Prostate gland (tissue), 2 donors: ENCODE measurements at regions of chr3 and their contacts with region 1.

Region 1: GRCh38 chr3:40191850-40192448 is 117.6 kb upstream of the EIF1B start:
- DNase-seq: peak; percentile 20
- H3K4me3 ChIP-seq: no peak overlapping the region
- H3K27ac ChIP-seq: no peak overlapping the region
- H3K4me1 ChIP-seq: no peaks in the 10 kb centered on the region
- H3K27me3 ChIP-seq: no peaks in the 10 kb centered on the region
- CTCF ChIP-seq: peak; percentile 67 to 86 (median 76)
- POLR2A ChIP-seq: no peak

Region 2: DNA sequence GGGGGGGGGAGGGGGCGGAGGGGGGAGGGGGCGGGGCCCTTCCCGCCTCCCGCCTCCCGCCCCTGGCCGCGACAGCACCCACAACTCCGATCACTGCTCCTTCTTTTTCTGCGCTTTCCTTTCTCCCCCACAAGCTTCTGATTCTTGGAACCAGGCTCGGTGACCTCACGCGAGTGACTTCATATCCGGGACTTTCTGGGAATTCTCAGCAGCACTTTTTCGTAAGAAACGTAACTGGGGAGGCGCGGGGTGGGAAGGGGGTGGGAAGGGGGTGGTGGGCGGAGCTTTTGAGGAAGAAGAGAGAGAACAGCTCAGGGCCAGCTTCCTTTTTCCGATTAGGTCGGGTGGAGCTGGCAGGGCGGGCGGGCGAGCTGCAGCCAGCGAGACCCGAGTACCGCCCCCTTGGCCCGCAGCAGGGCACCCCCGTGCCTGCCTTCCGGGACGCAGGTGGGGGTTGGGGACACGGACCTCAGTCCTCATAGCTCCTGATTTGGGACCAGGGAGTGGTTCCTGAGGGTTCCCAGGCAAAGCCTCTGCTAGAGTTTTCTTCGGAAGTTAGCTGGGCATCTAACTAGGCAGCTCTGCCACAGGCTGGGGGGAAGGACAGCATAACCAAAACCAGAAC is 1014.1 kb before region 1 on chr3:
- intact Hi-C with region 1: no loop called
- DNase-seq: peak; percentile 91
- H3K4me3 ChIP-seq: peak overlapping the region; percentile 27 to 34
- H3K27ac ChIP-seq: peak overlapping the region; percentile 93 to 94
- H3K4me1 ChIP-seq: peaks cover 4% of the 10 kb centered on the region
- H3K27me3 ChIP-seq: no peaks in the 10 kb centered on the region
- CTCF ChIP-seq: no peak
- POLR2A ChIP-seq: peak; percentile 84

Region 3: GRCh38 chr3:40086890-40087888 is 104.8 kb before region 1 on chr3:
- intact Hi-C with region 1: no loop called
- DNase-seq: peak; percentile 46
- H3K4me3 ChIP-seq: no peak overlapping the region
- H3K27ac ChIP-seq: no peak overlapping the region
- H3K4me1 ChIP-seq: no peaks in the 10 kb centered on the region
- H3K27me3 ChIP-seq: no peaks in the 10 kb centered on the region
- CTCF ChIP-seq: no peak
- POLR2A ChIP-seq: no peak

Region 4: DNA sequence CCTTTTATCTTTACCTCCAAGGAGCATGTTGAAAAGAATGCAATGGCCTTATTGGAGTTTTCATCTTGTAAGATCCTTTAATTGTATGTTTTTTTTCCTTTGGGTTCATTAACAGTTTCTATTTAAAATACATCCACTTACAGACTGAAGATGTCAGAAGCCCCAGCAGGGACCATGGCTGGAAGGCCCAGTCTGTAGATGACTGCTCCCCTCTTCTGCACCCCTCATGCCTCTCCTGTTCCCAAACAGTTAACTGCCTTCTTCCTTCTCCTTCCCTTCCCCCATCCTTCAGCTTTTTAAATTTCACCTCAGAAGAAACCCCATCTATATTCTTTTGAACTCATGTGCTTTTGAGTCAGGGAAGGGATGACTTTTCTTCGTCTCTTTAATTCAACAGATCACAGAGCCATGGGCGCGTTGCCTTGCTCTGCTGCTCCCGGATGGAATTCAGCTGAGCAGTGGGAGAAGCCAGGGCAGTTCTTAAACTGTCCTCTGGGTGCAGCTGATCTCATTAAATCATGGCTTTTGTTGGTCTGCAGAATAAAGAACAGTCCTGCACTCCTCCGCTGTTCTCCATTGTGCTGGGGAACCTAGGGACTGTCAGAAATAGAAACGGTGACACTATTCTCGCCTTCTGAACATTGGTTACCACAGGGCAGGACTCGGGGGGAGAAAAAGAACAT is 46.1 kb after region 1 on chr3:
- intact Hi-C with region 1: no loop called
- DNase-seq: no peak
- H3K4me3 ChIP-seq: no peak overlapping the region
- H3K27ac ChIP-seq: no peak overlapping the region
- H3K4me1 ChIP-seq: no peaks in the 10 kb centered on the region
- H3K27me3 ChIP-seq: no peaks in the 10 kb centered on the region
- CTCF ChIP-seq: no peak
- POLR2A ChIP-seq: no peak

Region 5: DNA sequence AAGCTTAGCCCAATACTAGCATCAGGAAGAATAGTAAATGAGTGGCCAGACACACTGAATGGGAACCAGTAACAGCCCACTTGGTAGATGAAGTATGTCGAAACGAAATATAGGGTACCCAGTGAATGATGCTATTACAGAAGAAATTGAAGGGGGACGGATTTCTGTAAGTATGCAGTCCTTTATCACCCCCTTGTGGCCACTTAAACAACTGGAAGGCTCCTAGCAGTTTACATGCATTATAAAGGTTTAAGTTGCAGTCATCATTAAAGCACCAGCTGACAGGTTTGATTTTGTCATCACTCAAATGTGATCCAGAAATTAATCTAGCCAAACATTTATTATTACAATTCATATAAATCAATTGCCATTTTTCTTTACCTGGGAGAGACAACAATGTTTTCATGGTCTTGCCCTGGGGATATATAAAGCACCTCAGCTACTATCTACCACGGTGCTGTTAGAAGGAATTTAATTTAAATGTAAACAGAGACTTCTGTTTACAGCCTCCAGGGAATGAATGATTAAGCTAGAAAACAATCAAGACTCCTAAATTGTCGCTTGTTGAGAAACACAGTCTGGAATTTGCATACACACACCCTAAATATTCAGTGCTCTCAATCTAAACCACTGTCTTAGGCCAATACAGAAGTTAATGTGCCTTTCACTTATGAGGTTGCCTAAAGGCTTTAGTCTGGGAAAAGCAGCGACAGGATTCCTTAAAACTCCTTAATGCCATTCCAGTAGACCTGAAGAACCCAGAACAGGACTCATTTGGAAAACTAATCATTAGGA is 125.3 kb after region 1 on chr3:
- intact Hi-C with region 1: loop called (anchors 5 kb)
- DNase-seq: peak; percentile 44
- H3K4me3 ChIP-seq: no peak overlapping the region
- H3K27ac ChIP-seq: no peak overlapping the region
- H3K4me1 ChIP-seq: no peaks in the 10 kb centered on the region
- H3K27me3 ChIP-seq: no peaks in the 10 kb centered on the region
- CTCF ChIP-seq: peak; percentile 48 to 84 (median 79)
- POLR2A ChIP-seq: no peak